Panc1 (cell line): ENCODE measurements at regions of chr14 and their contacts with region 1.

Region 1: DNA sequence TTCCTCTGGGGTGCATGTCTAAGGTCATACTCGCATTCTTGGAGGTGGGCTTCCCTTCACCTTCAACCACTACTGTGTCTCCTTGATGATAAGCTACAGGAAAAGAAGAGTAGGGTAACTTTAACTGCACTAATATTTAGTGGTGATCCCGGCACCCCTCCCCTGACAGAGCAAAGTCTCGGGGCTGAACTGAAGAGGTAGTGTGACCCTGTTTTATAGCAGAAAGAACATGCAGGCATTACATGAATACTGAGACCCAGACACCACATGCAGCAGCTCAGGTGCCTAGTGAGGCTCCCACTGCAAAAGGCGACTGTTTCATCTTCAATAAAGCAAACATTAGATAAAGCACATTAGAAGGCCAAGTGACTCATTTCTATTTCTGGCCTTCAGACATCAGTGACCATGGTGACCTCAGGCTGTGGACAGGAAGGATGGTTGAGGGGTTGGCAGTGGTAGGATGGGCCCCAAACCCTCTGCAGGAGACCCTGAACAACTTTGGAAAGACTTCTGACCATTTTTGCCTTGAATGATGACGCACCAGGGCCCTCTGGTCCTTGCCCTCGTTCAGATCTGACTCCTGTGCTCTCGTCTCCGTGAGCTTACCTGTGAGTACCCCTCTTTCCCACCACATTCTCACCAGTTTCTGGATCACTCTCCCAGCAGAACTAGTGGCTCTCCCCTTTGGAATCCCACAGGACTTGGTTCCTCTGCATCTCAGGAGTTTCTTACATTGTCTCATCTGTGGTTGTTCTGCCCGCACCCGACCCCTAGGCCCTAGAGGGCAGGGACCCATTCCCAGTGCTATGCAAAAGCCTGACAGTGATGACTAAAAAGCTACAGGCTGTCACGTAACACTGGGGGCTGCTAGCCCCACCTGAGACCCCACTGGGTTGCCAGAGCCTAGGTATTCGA is 23.8 kb upstream of the JPH4 start:
- DNase-seq: no peak
- ATAC-seq: no peak
- H3K4me3 ChIP-seq: no peak overlapping the region
- H3K27ac ChIP-seq: no peak overlapping the region
- H3K4me1 ChIP-seq: no peaks in the 10 kb centered on the region
- H3K27me3 ChIP-seq: peaks cover 3% of the 10 kb centered on the region; the same call in 1 of the 2 replicates
- CTCF ChIP-seq: no peak

Region 2: GRCh38 chr14:21723431-21724045 is 1878.9 kb before region 1 on chr14:
- CTCF ChIA-PET with region 1: interaction called, 10 read pairs
- POLR2A ChIA-PET with region 1: no interaction called
- in situ Hi-C with region 1: no loop called
- intact Hi-C with region 1: no loop called
- DNase-seq: no peak
- ATAC-seq: 0 out of 2 replicates have a peak, but pooled peaks have one; percentile 58
- H3K4me3 ChIP-seq: no peak overlapping the region
- H3K27ac ChIP-seq: no peak overlapping the region
- H3K4me1 ChIP-seq: no peaks in the 10 kb centered on the region
- H3K27me3 ChIP-seq: peaks cover 3% of the 10 kb centered on the region; the same call in 1 of the 2 replicates
- CTCF ChIP-seq: peak; percentile 42